ENCODE measurements at regions of chr21 and their contacts with region 1.

Region 1: GRCh38 chr21:33915368-33916199 is at the start of gene ATP5PO:
- DNase-seq: peak; percentile 78 to 95
- ATAC-seq: peak; percentile 100
- H3K4me3 ChIP-seq: peak within 1 kb of the TSS; percentile 60
- H3K27ac ChIP-seq: peak within 1 kb of the TSS; percentile 69 to 96
- H3K4me1 ChIP-seq: peaks cover 8% of the 10 kb centered on the region; the same call in 1 of the 3 replicates
- CTCF ChIP-seq: no peak
- EP300 ChIP-seq: no peak
- POLR2A ChIP-seq: peak; percentile 88
- RAD21 ChIP-seq: no peak
- polyA plus RNA-seq, gene ATP5PO: 252 and 266 TPM in 2 replicates

Region 2: GRCh38 chr21:33817663-33818451 is 97.7 kb before region 1 on chr21:
- CTCF ChIA-PET with region 1: no interaction called
- POLR2A ChIA-PET with region 1: no interaction called
- DNase-seq: no peak
- ATAC-seq: no peak
- H3K4me3 ChIP-seq: no peak overlapping the region
- H3K27ac ChIP-seq: no peak overlapping the region
- H3K4me1 ChIP-seq: peaks cover 4% of the 10 kb centered on the region; the same call in 1 of the 3 replicates
- CTCF ChIP-seq: no peak
- EP300 ChIP-seq: no peak
- POLR2A ChIP-seq: no peak
- RAD21 ChIP-seq: no peak

Region 3: DNA sequence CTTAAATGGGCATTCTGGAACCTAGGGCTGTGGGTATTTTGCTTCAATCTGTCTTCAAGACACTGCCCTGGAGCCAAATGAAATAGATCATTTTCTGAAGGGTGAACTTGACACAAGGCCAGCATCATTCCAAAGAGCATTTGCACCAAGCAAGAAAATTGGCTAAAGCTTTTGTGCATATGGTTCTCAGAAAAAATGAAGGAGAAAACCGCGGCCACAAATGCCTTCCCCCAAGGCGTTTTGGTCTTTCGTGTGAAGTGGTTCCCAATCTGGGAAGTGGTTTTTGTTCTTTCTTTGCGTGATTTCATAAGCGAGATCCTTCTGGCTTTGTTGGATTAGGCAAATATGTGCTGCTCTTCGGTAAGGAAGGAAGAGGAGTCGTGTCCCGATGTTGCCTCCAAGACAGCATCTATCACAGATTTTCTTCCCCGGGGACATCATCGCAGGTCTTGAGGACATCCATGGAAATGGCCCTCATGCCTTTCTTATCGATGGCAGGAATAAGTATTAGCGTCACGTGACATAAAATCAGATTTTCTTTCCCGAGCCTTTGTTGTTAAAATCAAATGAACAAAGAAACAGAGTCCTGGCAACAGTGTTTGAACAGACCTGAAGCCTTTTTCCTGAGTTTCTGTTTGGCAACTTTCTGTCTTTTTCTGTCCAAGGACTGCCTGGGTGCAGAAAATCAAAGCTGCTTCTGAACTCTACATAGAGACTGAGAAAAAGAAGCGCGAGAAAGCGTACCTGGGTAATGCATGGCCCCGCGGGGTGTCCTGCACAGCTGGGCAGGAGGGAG is 31.0 kb before region 1 on chr21:
- CTCF ChIA-PET with region 1: no interaction called
- POLR2A ChIA-PET with region 1: no interaction called
- DNase-seq: no peak
- ATAC-seq: no peak
- H3K4me3 ChIP-seq: no peak overlapping the region
- H3K27ac ChIP-seq: no peak overlapping the region
- H3K4me1 ChIP-seq: no peaks in the 10 kb centered on the region
- CTCF ChIP-seq: no peak
- EP300 ChIP-seq: no peak
- POLR2A ChIP-seq: no peak
- RAD21 ChIP-seq: no peak

Region 4: DNA sequence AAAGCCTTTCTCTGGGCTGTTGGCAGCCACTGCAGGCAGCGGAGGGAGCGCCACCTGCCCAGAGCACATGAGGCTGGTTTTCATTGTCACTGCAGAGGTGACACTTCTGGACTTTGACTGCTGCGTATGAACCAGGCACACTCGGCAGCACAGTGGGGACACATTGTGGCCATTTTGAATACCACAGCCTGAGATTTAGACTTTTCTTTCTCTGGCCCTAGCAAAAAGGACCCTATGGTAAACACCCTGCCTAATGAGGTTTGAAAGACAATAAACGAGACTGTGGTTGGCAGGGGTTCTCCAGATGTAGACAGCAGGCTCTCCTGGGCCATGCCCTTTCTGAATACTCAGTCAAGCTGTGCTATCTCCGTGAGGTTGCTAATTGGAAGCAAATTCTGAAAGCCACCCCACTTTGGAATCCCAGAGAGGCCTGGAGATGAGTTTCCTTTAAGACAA is 436.2 kb after region 1 on chr21:
- CTCF ChIA-PET with region 1: interaction called, 239 read pairs
- POLR2A ChIA-PET with region 1: interaction called, 3 read pairs
- DNase-seq: peak; percentile 21 to 34
- ATAC-seq: peak; percentile 74 to 81
- H3K4me3 ChIP-seq: no peak overlapping the region
- H3K27ac ChIP-seq: no peak overlapping the region
- H3K4me1 ChIP-seq: no peaks in the 10 kb centered on the region
- CTCF ChIP-seq: peak; percentile 28; the same call in 2 of the 3 replicates
- EP300 ChIP-seq: no peak
- POLR2A ChIP-seq: no peak
- RAD21 ChIP-seq: peak; percentile 61 to 62

Measured in A549 (cell line).